ENCODE measurements at regions of chr16 and their contacts with region 1.

Region 1: GRCh38 chr16:85675251-85675927 is 13.4 kb downstream of the GINS2 start:
- DNase-seq: no peak
- H3K4me3 ChIP-seq: no peak overlapping the region
- H3K27ac ChIP-seq: no peak overlapping the region
- H3K4me1 ChIP-seq: no peaks in the 10 kb centered on the region
- H3K27me3 ChIP-seq: no peaks in the 10 kb centered on the region
- CTCF ChIP-seq: peak in 2 of 3 experiments; percentile 47 to 68; a peak in 2 of 4 replicates
- EP300 ChIP-seq: no peak
- POLR2A ChIP-seq: peak in 1 of 2 experiments; percentile 46; a peak in 2 of 3 replicates
- RAD21 ChIP-seq: peak; percentile 35 to 55

Region 2: GRCh38 chr16:85688586-85689284 is 13.3 kb after region 1 on chr16 and contains the start of gene GINS2:
- CTCF ChIA-PET with region 1: interaction called, 29 read pairs
- POLR2A ChIA-PET with region 1: interaction called, 77 read pairs
- DNase-seq: peak; percentile 60 to 86
- H3K4me3 ChIP-seq: peak within 1 kb of the TSS; percentile 59 to 90 (median 78)
- H3K27ac ChIP-seq: no peak within 1 kb of the TSS; the same call in 1 of the 2 replicates
- H3K4me1 ChIP-seq: peaks cover 0 to 5% (median 0%) of the 10 kb centered on the region in 4 experiments; a peak in 1 of 7 replicates
- H3K27me3 ChIP-seq: no peaks in the 10 kb centered on the region
- CTCF ChIP-seq: no peak
- EP300 ChIP-seq: no peak
- POLR2A ChIP-seq: peak in 1 of 2 experiments; percentile 74; a peak in 2 of 3 replicates
- RAD21 ChIP-seq: no peak
- total RNA-seq, gene GINS2: 51.4 and 59.1 TPM in 2 replicates

Region 3: DNA sequence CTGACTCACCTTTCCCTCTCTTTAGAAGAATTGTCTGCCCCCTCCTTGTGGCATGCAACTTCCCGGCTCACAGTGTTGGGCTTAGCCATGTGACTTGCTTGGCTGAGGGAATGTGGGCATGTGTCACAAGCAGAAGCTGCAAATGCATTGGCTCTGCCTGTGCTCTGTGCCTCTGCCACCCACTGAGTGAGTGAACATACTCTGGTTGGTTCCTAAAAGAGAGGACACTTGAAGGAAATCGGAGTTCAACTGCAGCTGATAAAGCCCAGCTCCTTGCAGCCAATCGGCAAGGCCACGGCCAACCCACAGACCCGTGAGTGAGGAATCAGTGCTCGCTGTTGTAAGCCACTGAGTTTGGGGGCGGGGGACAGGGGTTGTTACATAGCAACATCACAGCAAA is 24.2 kb after region 1 on chr16:
- CTCF ChIA-PET with region 1: interaction called, 31 read pairs
- POLR2A ChIA-PET with region 1: interaction called, 3 read pairs
- DNase-seq: no peak
- H3K4me3 ChIP-seq: no peak overlapping the region
- H3K27ac ChIP-seq: no peak overlapping the region
- H3K4me1 ChIP-seq: peaks cover 0 to 6% (median 2%) of the 10 kb centered on the region in 4 experiments; a peak in 3 of 7 replicates
- H3K27me3 ChIP-seq: no peaks in the 10 kb centered on the region
- CTCF ChIP-seq: no peak
- EP300 ChIP-seq: no peak
- POLR2A ChIP-seq: no peak
- RAD21 ChIP-seq: no peak

Region 4: DNA sequence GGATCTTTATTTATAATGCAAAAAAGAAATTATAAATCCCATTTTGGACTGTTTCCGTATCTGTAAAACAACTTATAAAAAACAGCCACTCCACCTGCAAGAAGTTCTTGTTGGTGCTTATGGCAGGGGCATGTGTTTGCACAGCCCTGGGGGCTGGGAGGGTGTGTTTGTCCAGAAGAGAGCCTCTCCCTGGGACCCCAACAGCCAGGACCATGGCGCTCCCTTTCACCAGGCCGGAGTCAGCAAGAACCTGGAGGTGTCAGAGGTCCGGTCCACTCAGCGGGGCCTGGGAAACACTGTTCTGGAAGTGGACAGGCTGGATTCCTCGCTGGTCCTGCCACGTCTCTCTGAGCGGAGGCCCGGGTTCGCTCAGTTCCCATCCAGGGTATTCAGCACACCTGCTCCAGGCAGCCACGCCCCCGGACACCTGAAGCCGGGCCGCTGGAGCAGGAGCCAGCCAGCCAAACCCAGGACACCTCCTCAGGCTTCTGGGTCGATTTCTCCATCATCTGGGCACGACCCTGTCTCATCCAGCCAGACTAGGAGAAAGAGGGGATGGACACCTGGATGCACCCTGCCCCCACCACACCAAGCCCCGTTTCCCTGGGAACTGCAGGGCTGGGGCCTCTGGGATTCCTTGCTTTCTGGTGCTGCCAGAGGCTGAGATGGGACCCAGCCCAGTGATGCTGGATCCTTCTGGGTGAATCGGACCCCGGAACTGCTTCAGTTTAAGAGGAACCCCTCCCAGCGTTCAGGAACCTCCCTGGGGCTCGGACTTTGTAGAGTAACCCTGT is 32.3 kb after region 1 on chr16:
- CTCF ChIA-PET with region 1: interaction called, 620 read pairs
- POLR2A ChIA-PET with region 1: interaction called, 6 read pairs
- DNase-seq: no peak
- H3K4me3 ChIP-seq: no peak overlapping the region
- H3K27ac ChIP-seq: no peak overlapping the region
- H3K4me1 ChIP-seq: no peaks in the 10 kb centered on the region
- H3K27me3 ChIP-seq: no peaks in the 10 kb centered on the region
- CTCF ChIP-seq: no peak
- EP300 ChIP-seq: no peak
- POLR2A ChIP-seq: no peak
- RAD21 ChIP-seq: no peak

Region 5: GRCh38 chr16:85781695-85782370 is 106.4 kb after region 1 on chr16:
- CTCF ChIA-PET with region 1: no interaction called
- POLR2A ChIA-PET with region 1: no interaction called
- DNase-seq: no peak
- H3K4me3 ChIP-seq: no peak overlapping the region
- H3K27ac ChIP-seq: no peak overlapping the region
- H3K4me1 ChIP-seq: no peaks in the 10 kb centered on the region
- H3K27me3 ChIP-seq: no peaks in the 10 kb centered on the region
- CTCF ChIP-seq: no peak
- EP300 ChIP-seq: no peak
- POLR2A ChIP-seq: no peak
- RAD21 ChIP-seq: no peak